Left cardiac atrium (tissue), 4 donors: ENCODE measurements at regions of chr6 and their contacts with region 1.

Region 1: DNA sequence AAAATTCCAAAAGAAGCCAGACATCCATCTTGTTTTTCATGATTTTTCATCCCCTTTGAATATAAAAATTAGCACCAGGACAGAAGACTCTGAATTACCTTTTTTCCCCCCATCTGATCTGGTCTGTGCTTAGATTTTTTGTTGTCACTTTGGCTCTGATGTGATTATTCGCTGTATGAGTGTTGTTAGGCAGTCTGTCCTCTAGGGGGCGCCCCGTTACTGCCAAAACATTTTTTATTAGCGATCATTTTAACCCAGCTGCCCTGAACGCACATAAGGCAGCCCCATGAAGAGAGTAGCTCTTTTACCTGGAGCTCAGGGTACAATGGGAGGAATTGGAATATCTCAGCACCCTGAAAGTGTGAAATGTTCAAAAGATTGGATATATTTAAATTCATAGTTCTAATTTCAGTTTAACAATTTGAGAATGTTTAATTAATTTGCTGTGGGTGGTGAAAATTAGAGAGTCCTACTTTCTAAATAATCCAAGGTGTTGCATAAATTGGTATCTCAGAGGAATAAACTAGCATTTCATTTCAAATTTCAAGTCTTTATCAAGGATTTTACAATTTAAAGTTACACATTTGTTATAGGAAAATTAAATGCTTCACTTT is 60.8 kb downstream of the PRPH2 start:
- DNase-seq: peak; percentile 81
- ATAC-seq: peak; percentile 78 to 81

Region 2: GRCh38 chr6:42726485-42727086 is 64.9 kb after region 1 on chr6:
- intact Hi-C with region 1: loop called (anchors 1 to 5 kb)
- DNase-seq: peak; percentile 79
- ATAC-seq: peak; percentile 95 to 96

Region 3: DNA sequence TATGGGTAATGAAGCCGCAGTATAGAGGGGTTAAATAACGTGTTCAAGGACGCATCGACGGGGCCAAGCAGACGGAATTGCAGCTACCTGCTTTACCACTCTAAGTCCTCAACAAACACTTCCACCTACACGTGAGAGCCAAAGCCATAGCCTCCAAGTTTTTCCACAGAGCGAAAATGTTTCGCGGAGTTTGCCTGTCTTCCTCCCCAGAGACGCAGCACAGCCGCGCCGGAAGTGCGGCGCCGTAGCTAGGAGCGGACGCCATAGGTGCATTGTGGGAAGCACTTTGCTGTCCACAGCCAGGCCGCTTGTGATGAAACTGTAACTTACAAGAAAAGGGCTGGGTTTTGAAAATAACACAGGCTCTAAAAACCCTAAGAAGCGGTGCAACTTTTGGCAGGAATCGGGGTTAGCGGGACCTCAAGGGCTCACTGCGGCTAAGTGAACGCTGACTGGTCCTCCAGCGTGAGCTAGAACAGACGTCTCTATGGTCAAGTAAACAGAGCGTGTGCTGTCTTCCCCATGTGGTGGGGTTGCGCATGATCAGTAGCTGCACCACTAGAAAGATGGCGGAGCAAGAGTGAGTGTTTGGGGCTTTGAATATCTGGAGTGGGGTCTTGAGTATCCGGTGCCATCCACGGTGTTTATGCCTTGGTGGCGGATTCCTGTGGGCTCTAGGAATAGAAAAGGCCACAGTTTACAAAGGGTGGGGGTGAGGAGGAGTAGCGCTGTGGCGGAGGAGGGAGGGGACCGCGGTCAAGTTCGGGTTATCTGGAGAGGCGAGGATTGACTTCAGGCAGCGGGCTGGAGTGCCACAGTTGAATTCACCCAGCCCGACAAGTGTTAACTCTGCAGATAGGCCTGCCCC is 218.0 kb after region 1 on chr6 and contains the start of gene RPL7L1:
- intact Hi-C with region 1: loop called in 1 of 2 experiments (anchors 2 kb)
- DNase-seq: peak; percentile 81
- ATAC-seq: peak; percentile 97 to 98
- total RNA-seq, gene RPL7L1: 50.8 to 60.8 TPM

Region 4: DNA sequence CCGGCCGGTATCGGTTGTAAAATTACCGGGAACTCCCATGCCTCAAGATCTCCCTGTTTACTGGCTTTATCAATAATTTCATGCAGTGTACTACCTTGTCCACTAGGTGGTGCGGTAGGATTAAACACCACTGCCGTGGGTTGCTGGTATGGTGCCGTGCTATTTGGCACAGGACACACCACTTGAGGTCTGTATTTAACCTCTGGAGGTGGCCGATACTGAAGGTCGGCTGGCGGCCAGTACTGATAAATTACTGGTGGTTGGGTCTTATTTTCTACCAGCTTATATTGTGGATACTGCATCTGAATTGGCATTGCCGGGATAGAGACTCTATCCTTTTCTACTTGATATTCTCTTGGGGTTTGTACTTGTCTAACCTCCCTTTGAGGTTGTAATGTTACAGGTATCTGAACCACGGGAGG is 239.9 kb after region 1 on chr6:
- intact Hi-C with region 1: loop called in 1 of 2 experiments (anchors 5 kb)
- DNase-seq: peak; percentile 87
- ATAC-seq: peak; percentile 97 to 98